ENCODE measurements at regions of chr17 and their contacts with region 1.

Region 1: DNA sequence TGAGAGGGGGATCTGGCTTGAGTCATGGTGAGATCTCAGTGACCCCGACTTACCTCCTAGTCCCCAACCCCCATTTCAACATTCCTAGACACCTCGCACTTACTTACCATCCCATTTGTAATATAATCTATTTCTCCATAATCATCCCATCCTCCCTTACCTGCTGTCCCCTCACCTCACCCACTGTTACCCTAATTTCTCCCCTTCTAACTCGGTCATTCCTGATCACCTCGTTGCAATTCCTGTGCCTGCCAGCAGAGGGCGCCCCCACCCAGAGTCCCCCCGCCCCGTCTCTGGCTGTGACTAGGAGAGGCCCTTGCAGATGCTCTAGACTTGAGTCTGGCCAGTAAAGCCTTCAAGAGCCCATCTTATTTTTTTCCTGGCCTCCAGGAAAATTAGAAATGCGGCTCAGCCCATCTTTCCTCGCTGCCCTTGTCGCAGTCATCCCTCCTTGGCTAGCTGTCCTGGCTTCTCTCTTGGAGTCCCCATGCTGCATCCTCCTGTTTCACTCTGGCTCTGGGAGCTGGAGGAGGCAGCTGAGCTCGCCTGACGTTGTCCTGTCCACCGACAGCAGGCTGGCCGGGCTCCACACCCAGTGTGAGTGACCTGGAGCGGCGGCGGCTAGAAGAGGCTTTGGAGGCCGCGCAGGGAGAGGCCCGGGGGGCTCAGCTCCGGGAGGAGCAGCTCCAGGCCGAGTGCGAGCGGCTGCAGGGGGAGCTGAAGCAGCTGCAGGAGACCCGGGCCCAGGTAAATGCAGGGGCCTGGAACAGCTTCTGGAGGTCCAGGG is 5.0 kb downstream of the TBKBP1 start:
- DNase-seq: no peak
- ATAC-seq: no peak
- H3K4me3 ChIP-seq: no peak overlapping the region
- H3K27ac ChIP-seq: no peak overlapping the region
- H3K4me1 ChIP-seq: peaks cover 4 to 7% of the 10 kb centered on the region in 2 donors
- H3K27me3 ChIP-seq: no peaks in the 10 kb centered on the region
- CTCF ChIP-seq: peak; percentile 57 to 97 (median 84)
- POLR2A ChIP-seq: no peak

Region 2: DNA sequence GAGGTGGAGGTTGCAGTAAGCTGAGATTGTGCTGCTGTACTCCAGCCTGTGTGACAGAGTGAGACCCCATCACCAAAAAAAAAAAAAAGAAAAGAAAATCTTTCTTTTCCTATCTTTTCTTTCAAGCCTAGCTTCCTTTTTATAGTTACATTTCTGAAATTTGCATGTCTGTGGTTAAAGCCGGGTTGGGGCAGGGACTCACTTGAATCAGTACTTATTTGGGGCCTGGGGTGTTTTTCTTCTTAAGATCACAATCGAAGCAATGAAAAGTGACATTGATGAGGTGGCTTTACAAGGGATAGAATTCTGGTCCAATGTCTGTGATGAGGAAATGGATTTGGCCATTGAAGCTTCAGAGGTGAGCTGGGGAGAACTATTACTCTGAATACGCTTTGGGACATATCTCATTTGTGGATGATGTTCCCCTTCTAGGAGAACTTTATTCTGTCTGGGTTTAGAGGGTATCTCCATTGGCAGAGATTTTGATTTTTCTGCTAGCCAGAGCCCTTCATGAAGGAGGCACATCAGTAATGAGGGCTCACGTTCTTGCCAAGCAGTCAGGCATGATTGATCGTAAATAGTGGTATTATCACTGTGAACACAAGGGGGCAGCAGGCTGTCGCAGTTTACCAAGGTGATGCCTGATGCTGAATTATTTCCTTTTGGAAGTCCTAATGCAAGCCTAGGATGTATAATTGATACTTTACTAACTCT is 34.9 kb before region 1 on chr17:
- in situ Hi-C with region 1: no loop called
- intact Hi-C with region 1: loop called (anchors 2 kb)
- DNase-seq: no peak
- ATAC-seq: peak; percentile 29 to 63
- H3K4me3 ChIP-seq: no peak overlapping the region
- H3K27ac ChIP-seq: no peak overlapping the region
- H3K4me1 ChIP-seq: no peaks in the 10 kb centered on the region
- H3K27me3 ChIP-seq: no peaks in the 10 kb centered on the region
- CTCF ChIP-seq: peak; percentile 51 to 69 (median 56)
- POLR2A ChIP-seq: no peak

Region 3: GRCh38 chr17:47970704-47971463 is 271.9 kb after region 1 on chr17 and contains the start of gene CDK5RAP3:
- in situ Hi-C with region 1: no loop called
- intact Hi-C with region 1: no loop called
- DNase-seq: peak; percentile 100
- ATAC-seq: peak; percentile 98 to 99
- H3K4me3 ChIP-seq: peak within 1 kb of the TSS; percentile 77 to 100 (median 90)
- H3K27ac ChIP-seq: peak within 1 kb of the TSS; percentile 85 to 89 (median 88)
- H3K4me1 ChIP-seq: peaks cover 6 to 18% of the 10 kb centered on the region in 2 donors
- H3K27me3 ChIP-seq: no peaks in the 10 kb centered on the region
- CTCF ChIP-seq: peak; percentile 95 to 96 (median 96)
- POLR2A ChIP-seq: peak; percentile 71 to 74
- total RNA-seq, gene CDK5RAP3: 14.2 to 35.9 (median 27.8) TPM

Measured in gastrocnemius medialis (tissue), 4 donors.